ENCODE measurements at regions of chr19 and their contacts with region 1.

Region 1: DNA sequence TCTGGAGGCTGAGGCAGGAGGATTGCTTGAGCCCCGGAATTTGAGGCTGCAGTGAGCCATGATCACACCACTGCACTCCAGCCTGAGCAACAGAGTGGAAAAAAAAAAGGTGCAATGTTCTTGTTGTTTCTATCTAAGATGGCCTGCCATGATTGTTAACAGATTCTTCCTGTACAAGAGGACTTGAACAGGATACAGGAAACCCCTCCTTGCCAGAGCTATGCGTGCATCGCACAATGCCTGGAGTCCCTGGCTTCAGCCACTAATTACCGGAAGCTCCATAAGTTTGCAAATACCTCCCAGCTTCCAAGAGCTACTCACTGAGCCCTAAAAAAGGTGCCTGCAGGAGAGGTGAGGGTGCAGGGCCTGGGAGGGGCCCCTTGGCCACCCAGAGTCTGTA is 13.1 kb upstream of the HIF3A start:
- DNase-seq: no peak
- H3K4me3 ChIP-seq: no peak overlapping the region
- CTCF ChIP-seq: no peak

Region 2: GRCh38 chr19:46265217-46265828 is 18.4 kb before region 1 on chr19:
- CTCF ChIA-PET with region 1: interaction called, 15 read pairs
- POLR2A ChIA-PET with region 1: no interaction called
- DNase-seq: no peak
- H3K4me3 ChIP-seq: no peak overlapping the region
- CTCF ChIP-seq: peak; percentile 49

Region 3: DNA sequence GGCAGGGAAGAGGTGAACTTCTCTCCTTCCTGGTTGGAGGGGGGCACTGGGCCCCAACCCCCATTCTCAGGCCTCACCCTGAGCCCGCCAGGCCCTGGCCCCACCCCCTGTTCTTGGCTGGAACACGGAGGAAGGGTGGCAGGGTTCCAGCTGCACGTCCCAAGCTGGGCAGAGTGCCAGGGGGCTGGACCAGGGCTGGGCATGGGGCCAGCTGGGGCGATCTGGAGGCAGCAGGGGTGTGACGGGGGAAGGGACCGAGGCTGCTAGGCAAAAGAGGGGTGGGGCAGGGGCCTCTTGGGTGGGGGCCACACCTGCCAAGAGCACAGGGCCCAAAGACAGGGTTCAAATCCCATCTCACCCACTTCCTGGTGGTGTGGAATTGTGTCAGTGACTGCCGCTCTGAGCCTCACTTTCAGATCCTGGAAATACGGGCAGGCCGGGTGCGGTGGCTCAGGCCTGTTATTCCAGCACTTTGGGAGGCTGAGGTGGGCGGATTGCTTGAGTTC is 15.3 kb after region 1 on chr19:
- CTCF ChIA-PET with region 1: interaction called, 20 read pairs
- POLR2A ChIA-PET with region 1: no interaction called
- DNase-seq: no peak
- H3K4me3 ChIP-seq: no peak overlapping the region
- CTCF ChIP-seq: no peak

Region 4: GRCh38 chr19:46346821-46347571 is 63.2 kb after region 1 on chr19 and contains the start of gene PPP5C:
- CTCF ChIA-PET with region 1: interaction called, 14 read pairs
- POLR2A ChIA-PET with region 1: no interaction called
- DNase-seq: peak; percentile 21
- H3K4me3 ChIP-seq: peak within 1 kb of the TSS; percentile 99
- CTCF ChIP-seq: peak; percentile 95

Region 5: DNA sequence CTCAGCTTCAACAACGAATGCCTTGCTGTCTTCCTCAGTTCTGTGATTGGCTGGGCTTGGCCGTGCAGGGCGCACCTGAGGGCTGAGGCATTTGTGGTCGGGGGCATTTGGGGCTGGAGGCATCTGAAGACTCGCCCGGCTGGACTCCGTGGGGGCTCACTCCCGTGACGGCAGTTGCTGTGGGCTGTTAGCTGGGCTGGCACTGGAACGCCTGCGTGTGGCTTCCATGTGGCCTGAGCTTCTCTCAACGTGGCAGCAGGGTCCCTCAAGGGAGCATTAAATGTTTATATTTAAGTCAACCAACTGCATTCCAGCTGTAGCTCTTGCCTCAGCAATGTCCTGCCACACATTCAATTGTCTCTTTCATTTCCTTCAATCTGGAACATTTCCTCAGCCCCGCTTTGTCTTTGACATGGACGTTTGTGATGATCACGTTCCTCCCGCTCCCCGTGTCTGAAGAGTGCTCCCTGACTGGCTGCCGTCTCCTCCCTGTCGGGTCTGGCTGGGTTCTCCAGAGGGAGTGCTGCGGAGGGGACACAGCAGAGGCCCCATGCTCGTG is 108.6 kb after region 1 on chr19:
- CTCF ChIA-PET with region 1: interaction called, 86 read pairs
- POLR2A ChIA-PET with region 1: no interaction called
- DNase-seq: no peak
- H3K4me3 ChIP-seq: no peak overlapping the region
- CTCF ChIP-seq: no peak

Region 6: GRCh38 chr19:46487802-46488445 is 204.2 kb after region 1 on chr19:
- CTCF ChIA-PET with region 1: interaction called, 39 read pairs
- POLR2A ChIA-PET with region 1: no interaction called
- DNase-seq: no peak
- H3K4me3 ChIP-seq: peak overlapping the region; percentile 47
- CTCF ChIP-seq: peak; percentile 95

Region 7: DNA sequence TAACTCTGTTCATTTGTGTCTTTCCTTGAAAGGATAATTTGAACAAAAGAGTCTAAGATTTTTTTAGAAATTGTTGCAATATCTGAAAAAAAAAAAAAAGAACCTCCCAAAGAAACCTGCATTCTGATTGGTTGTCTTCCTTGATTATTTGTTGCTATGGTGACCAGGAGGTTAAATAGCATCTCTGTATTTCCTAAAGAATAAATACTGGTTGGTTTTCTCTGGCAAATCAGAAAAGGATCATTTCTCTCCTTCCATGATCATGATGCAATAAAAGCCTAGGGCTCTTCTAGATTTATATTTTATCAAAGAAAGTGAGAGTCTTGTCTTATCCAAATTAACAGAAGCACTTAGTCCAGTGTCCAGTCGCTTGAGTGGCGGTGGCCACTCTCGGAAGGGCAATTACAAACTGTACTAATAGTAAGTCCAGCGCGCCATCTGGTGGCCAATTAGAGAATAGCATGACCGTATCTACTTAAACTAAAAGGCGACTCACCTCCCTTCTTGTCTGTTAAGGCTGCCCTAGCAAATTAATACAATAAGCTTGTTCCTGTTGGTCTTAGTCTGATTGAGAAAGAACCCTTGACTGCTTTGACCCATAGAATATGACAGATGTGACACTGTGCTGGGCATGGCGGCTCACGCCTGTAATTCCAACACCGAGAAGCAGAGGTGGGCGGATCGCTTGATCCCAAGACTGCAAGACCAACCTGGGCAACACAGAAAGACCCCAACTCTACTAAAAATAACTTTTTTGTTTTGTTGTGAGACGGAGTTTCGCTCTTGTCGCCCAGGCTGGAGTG is 258.9 kb after region 1 on chr19:
- CTCF ChIA-PET with region 1: interaction called, 24 read pairs
- POLR2A ChIA-PET with region 1: no interaction called
- DNase-seq: peak; percentile 73
- H3K4me3 ChIP-seq: no peak overlapping the region
- CTCF ChIP-seq: peak; percentile 60

Measured in AG04449 (cell line).